ENCODE measurements at regions of chr13 and their contacts with region 1.

Region 1: GRCh38 chr13:97018029-97018831 is 24.0 kb upstream of the OXGR1 start:
- DNase-seq: peak; percentile 6
- H3K4me3 Mint-ChIP-seq: no peak overlapping the region
- H3K27ac Mint-ChIP-seq: no peak overlapping the region
- H3K4me1 Mint-ChIP-seq: no peaks in the 10 kb centered on the region
- H3K27me3 Mint-ChIP-seq: peaks cover 13% of the 10 kb centered on the region

Region 2: DNA sequence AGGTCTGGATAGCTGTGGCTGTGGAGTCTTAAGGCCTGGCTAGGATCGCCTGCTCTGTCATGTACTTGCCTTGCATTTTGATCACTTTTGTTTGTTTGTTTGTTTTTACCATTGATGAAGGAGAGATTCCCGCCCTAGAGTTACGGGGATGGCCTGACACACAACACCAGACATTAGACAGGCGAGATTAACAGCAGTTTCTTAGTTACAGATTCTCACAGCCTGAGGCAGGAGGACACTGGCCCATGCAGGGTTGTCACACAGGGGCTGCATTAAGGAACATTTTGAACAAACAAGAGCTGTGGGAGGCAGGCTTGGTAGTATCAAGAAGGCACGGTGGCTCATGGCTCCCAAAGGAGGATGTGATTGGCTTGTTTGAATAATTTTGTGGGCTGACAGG is 636.5 kb before region 1 on chr13:
- intact Hi-C with region 1: no loop called
- DNase-seq: no peak
- H3K4me3 Mint-ChIP-seq: no peak overlapping the region
- H3K27ac Mint-ChIP-seq: no peak overlapping the region
- H3K4me1 Mint-ChIP-seq: no peaks in the 10 kb centered on the region
- H3K27me3 Mint-ChIP-seq: no peaks in the 10 kb centered on the region

Region 3: DNA sequence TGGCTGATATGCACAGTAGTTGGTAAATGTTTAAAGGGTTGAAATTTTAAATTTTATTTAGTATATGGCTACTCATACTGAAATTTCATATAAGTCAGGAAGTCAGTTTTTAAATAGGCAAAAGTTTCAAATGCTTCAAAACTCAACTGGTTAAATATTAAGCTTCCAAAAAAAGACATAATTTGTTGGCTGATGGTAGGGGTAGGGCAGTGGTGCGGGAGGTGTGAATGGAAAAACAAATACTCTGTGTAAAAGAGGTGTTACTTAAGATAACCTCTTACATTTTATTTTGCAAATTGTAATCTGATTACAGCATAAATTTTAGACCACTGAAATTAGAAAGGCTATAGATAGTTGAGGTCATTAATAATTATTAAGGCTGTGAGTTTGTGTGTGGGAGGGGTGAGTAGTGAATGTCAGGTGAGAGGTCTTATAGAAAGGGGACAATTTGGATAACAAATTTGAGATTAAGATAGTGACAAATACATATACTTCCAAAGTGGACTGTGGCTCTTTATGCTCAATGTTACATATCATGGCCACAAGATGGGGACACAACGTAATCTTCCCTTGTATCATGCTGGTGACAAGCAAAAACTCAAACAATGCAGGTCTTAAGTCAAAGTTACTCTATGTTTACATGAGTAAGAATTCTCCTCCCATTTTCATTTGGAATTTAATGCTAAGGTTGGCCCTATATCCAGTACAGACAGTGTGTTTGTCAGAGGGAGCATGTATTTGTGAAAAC is 12.6 kb after region 1 on chr13:
- intact Hi-C with region 1: loop called (anchors 1 kb)
- DNase-seq: no peak
- H3K4me3 Mint-ChIP-seq: no peak overlapping the region
- H3K27ac Mint-ChIP-seq: no peak overlapping the region
- H3K4me1 Mint-ChIP-seq: no peaks in the 10 kb centered on the region
- H3K27me3 Mint-ChIP-seq: peaks cover 3% of the 10 kb centered on the region

Region 4: DNA sequence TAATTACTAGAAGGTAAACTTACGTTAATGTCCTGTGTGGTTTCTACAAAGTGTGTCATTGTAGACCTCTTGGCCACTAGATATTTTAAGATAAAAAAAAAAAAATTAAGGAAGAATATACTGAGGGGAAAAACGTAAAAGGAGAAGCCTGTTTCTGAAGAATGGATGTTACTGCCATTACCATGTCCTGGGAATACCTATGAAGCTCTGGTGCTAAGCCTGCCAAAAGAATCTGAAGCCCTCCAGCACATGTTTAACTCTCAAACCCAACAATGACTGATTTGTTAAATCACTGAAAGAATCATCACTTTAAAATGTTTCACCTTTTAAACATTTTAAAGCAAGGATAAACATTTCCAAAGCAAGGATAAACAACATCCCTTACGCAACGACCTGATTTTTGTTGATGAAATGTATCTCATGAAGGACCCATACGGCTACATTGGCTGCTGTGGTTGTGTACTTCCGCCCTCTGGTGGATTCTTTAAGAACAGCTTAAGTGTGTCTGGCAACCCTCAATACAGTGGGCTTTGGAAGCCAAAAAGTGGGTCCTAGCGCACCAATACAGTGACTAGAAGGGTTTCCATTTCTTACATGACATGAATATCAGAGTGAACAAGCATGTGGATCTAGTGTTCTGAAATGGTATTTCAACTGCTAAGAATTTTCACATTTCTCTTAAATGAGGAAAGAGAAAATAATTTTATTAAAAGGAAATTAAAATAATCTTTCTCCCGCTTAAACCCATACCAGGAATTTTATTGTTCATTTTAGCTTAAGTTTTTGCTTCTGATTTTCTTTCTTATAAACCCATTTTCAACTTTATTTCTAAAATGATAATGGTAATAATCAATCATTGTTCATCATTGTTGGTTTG is 341.2 kb after region 1 on chr13:
- intact Hi-C with region 1: loop called (anchors 1 kb)
- DNase-seq: peak; percentile 11
- H3K4me3 Mint-ChIP-seq: no peak overlapping the region
- H3K27ac Mint-ChIP-seq: no peak overlapping the region
- H3K4me1 Mint-ChIP-seq: no peaks in the 10 kb centered on the region
- H3K27me3 Mint-ChIP-seq: no peaks in the 10 kb centered on the region

Region 5: DNA sequence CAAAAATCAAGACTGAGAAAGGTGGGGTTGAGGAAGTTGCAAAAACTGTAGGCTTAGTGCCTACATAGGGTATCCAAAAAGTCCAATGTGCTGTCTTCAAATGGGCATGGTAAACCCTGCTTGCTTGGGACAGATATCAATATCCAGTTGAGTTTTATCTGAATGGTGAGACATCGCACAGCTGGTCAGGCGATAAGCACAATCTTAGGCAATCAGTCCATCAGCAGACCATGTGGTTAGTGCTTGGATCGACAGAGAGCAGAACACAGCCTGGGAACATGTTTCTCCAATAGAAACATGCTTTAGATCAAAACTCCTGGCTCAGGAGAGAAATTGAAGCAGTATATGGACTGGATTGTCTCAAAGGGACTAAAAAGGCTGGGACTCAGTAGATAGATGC is 784.0 kb after region 1 on chr13:
- intact Hi-C with region 1: loop called (anchors 5 kb)
- DNase-seq: no peak
- H3K4me3 Mint-ChIP-seq: no peak overlapping the region
- H3K27ac Mint-ChIP-seq: no peak overlapping the region
- H3K4me1 Mint-ChIP-seq: no peaks in the 10 kb centered on the region
- H3K27me3 Mint-ChIP-seq: no peaks in the 10 kb centered on the region